Activated CD4-positive, alpha-beta T cell treated with anti-CD3 and anti-CD28 coated beads, Interleukin-2, amount 10 ng/mL, durations not matched to agents 24 days and 14 days (primary cell): ENCODE measurements at regions of chr2 and their contacts with region 1.

Region 1: GRCh38 chr2:232444409-232445148 is 11.4 kb upstream of the ALPI start:
- DNase-seq: peak; percentile 90
- H3K4me3 Mint-ChIP-seq: no peak overlapping the region
- H3K27ac Mint-ChIP-seq: peak overlapping the region; percentile 20
- H3K4me1 Mint-ChIP-seq: peaks cover 3% of the 10 kb centered on the region
- H3K27me3 Mint-ChIP-seq: no peaks in the 10 kb centered on the region

Region 2: DNA sequence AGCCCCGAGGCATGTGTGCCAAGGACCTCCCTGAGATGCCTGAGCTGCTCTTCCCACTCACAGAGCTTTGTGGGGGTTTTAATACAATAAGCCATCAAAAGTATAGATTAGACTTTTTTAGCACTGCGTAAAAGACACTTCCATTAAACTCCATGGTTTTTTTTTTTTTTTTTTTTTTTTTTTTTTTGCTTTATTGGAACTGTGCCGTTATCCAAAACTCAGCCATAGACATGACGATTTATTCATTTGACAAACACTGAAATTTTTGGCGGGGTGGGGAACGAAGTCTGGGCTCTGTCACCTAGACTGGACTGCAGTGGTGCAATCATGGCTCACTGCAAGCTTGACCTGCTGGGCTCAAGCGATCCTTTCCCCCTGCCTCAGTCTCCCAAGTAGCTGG is 536.8 kb before region 1 on chr2:
- intact Hi-C with region 1: loop called (anchors 2 kb)
- DNase-seq: no peak
- H3K4me3 Mint-ChIP-seq: no peak overlapping the region
- H3K27ac Mint-ChIP-seq: no peak overlapping the region
- H3K4me1 Mint-ChIP-seq: peaks cover 15% of the 10 kb centered on the region
- H3K27me3 Mint-ChIP-seq: no peaks in the 10 kb centered on the region

Region 3: DNA sequence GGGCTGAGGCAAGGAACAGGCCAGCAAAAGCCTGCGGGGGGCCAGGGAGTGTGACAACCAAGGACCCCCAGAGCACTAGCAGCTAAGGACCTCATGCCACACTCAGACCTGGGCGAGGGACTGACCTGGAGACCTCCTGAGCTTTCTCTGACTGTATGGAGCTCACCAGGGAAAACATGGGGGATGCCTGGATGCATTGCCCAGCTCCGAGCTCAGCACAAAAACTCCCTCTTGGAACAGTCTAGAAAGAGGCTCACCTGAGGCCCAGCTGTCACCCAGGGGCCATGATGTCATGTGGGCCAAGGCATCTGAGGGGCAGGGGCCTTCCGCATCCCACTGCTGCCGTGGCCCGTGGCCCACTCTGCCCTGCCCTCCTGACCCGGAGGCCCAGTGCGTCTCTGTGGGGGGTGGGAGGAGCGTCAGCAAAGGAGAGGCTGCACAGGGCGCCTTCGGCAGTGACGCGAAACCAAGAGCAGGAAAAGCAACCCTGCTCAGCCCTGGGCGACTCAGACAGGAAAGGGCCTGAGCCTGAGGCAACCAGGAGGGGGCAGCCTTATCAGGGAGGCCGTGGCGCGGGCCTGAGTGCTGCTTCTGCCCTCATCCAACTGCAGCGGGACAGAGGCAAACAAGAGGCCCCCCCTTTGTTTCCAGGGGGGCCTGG is 123.3 kb before region 1 on chr2:
- intact Hi-C with region 1: loop called (anchors 5 kb)
- DNase-seq: peak; percentile 91
- H3K4me3 Mint-ChIP-seq: peak overlapping the region; percentile 69
- H3K27ac Mint-ChIP-seq: peak overlapping the region; percentile 80
- H3K4me1 Mint-ChIP-seq: peaks cover 46% of the 10 kb centered on the region
- H3K27me3 Mint-ChIP-seq: no peaks in the 10 kb centered on the region

Region 4: DNA sequence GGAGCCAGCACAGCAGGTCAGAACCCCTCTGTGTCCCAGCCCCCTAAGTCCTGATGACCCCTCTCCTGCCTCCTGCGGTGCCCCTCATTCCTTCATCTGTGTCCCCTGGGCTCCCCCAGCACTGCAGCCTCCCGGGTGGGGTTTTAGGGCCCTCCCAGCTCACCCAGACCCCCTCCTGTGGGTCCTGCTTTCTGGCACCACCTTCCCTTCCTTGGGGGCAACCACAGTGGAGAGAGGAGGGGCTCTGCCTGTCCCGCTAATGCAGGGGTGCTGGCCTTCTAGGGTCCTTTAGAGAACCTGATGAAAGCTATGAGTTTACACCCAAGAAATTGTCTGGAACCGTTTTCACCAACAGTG is 108.7 kb before region 1 on chr2:
- intact Hi-C with region 1: loop called (anchors 1 kb)
- DNase-seq: no peak
- H3K4me3 Mint-ChIP-seq: no peak overlapping the region
- H3K27ac Mint-ChIP-seq: no peak overlapping the region
- H3K4me1 Mint-ChIP-seq: no peaks in the 10 kb centered on the region
- H3K27me3 Mint-ChIP-seq: no peaks in the 10 kb centered on the region

Region 5: GRCh38 chr2:232521959-232522622 is 77.5 kb after region 1 on chr2:
- intact Hi-C with region 1: loop called (anchors 2 kb)
- DNase-seq: peak; percentile 90
- H3K4me3 Mint-ChIP-seq: no peak overlapping the region
- H3K27ac Mint-ChIP-seq: no peak overlapping the region
- H3K4me1 Mint-ChIP-seq: peaks cover 2% of the 10 kb centered on the region
- H3K27me3 Mint-ChIP-seq: peaks cover 28% of the 10 kb centered on the region